Transverse colon (tissue), 4 donors: ENCODE measurements at regions of chr19 and their contacts with region 1.

Region 1: GRCh38 chr19:35013031-35013819 is 13.1 kb downstream of the GRAMD1A start:
- DNase-seq: peak; percentile 77
- H3K4me3 ChIP-seq: no peak overlapping the region
- H3K27ac ChIP-seq: peak overlapping the region; percentile 13 to 61 (median 18)
- H3K4me1 ChIP-seq: peaks cover 4 to 22% (median 9%) of the 10 kb centered on the region in 4 donors
- H3K27me3 ChIP-seq: no peaks in the 10 kb centered on the region
- CTCF ChIP-seq: peak; percentile 98 to 99 (median 99)
- EP300 ChIP-seq: no peak
- POLR2A ChIP-seq: no peak

Region 2: GRCh38 chr19:34963573-34964409 is 49.4 kb before region 1 on chr19 and contains the start of gene ZNF792:
- in situ Hi-C with region 1: loop called in 1 of 4 experiments (anchors 10 kb)
- intact Hi-C with region 1: no loop called
- DNase-seq: peak; percentile 73
- H3K4me3 ChIP-seq: peak within 1 kb of the TSS; percentile 85 to 100 (median 93)
- H3K27ac ChIP-seq: peak within 1 kb of the TSS; percentile 73 to 89 (median 80)
- H3K4me1 ChIP-seq: peaks cover 7 to 21% (median 12%) of the 10 kb centered on the region in 4 donors
- H3K27me3 ChIP-seq: no peaks in the 10 kb centered on the region
- CTCF ChIP-seq: peak in 2 of 5 experiments; percentile 8 to 16
- EP300 ChIP-seq: no peak
- POLR2A ChIP-seq: peak; percentile 21
- total RNA-seq, gene ZNF792: 3.4 to 8.4 (median 6.5) TPM

Region 3: GRCh38 chr19:34974646-34975045 is 38.6 kb before region 1 on chr19:
- in situ Hi-C with region 1: loop called in 2 of 4 experiments (anchors 5 to 10 kb)
- intact Hi-C with region 1: loop called (anchors 2 kb)
- DNase-seq: no peak
- H3K4me3 ChIP-seq: no peak overlapping the region
- H3K27ac ChIP-seq: no peak overlapping the region
- H3K4me1 ChIP-seq: peaks cover 0 to 11% (median 0%) of the 10 kb centered on the region in 4 donors
- H3K27me3 ChIP-seq: no peaks in the 10 kb centered on the region
- CTCF ChIP-seq: no peak
- EP300 ChIP-seq: no peak
- POLR2A ChIP-seq: no peak

Region 4: GRCh38 chr19:35545001-35545911 is 532.0 kb after region 1 on chr19 and contains the start of gene TMEM147:
- in situ Hi-C with region 1: no loop called
- intact Hi-C with region 1: no loop called
- DNase-seq: peak; percentile 95
- H3K4me3 ChIP-seq: peak within 1 kb of the TSS; percentile 75 to 87 (median 81)
- H3K27ac ChIP-seq: peak within 1 kb of the TSS; percentile 75 to 90 (median 83)
- H3K4me1 ChIP-seq: peaks cover 14 to 21% (median 17%) of the 10 kb centered on the region in 4 donors
- H3K27me3 ChIP-seq: no peaks in the 10 kb centered on the region
- CTCF ChIP-seq: no peak
- EP300 ChIP-seq: no peak
- POLR2A ChIP-seq: peak; percentile 52
- total RNA-seq, gene TMEM147: 29.5 to 77.0 (median 54.0) TPM